Cardiac septum (tissue), 1 donor: ENCODE measurements at regions of chr3 and their contacts with region 1.

Region 1: GRCh38 chr3:179526989-179527391 is 35.7 kb upstream of the ACTL6A start:
- DNase-seq: peak; percentile 77

Region 2: GRCh38 chr3:179451265-179452175 is 75.5 kb before region 1 on chr3 and contains the start of gene GNB4:
- intact Hi-C with region 1: loop called (anchors 2 kb)
- DNase-seq: peak; percentile 92
- total RNA-seq, gene GNB4: 14.7 TPM

Region 3: GRCh38 chr3:179473565-179473964 is 53.4 kb before region 1 on chr3:
- intact Hi-C with region 1: loop called (anchors 5 kb)
- DNase-seq: no peak